Spleen (tissue), 13 donors: ENCODE measurements at regions of chr1 and their contacts with region 1.

Region 1: DNA sequence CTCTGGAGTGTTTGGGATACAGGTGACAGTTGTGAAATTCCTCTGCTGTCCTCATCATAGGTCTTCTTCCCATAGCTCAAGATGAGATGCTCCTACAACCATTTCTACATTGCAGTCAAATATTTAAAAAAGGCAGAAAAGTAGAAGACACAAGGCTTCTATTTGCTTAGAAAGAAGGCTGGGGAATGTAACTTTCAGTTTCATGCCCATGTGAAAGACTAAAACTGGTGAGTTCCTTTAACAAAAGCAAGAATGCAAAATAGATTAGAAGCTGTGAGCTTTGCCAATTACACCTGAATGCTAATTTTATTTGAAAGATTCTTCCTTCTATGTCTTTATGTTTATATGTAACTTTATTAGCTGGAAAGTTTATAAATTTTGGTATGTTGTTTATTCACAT is 1682.7 kb downstream of the BRINP3 start:
- DNase-seq: no peak
- H3K4me3 ChIP-seq: no peak overlapping the region
- H3K27ac ChIP-seq: no peak overlapping the region
- H3K4me1 ChIP-seq: no peaks in the 10 kb centered on the region
- H3K27me3 ChIP-seq: no peaks in the 10 kb centered on the region
- CTCF ChIP-seq: no peak
- POLR2A ChIP-seq: no peak

Region 2: DNA sequence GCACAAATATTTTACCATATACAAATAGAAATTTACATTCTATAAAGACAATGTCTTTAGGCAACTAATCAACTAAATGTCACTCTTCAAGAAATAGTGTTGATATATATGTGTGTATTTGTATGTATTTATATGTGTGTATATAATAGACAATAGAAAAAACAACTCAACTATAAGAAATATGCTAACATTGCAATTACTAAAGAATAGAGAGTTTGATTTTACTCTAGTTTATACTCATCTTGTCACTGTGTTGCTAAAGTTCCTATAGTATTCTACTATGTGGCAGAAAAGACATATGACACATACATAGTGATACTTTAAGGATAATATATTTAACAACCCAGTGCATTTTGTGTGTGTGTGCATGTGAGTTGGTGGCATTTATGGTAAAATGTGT is 237.9 kb before region 1 on chr1:
- intact Hi-C with region 1: no loop called
- DNase-seq: no peak
- H3K4me3 ChIP-seq: no peak overlapping the region
- H3K27ac ChIP-seq: no peak overlapping the region
- H3K4me1 ChIP-seq: no peaks in the 10 kb centered on the region
- H3K27me3 ChIP-seq: no peaks in the 10 kb centered on the region
- CTCF ChIP-seq: no peak
- POLR2A ChIP-seq: no peak

Region 3: DNA sequence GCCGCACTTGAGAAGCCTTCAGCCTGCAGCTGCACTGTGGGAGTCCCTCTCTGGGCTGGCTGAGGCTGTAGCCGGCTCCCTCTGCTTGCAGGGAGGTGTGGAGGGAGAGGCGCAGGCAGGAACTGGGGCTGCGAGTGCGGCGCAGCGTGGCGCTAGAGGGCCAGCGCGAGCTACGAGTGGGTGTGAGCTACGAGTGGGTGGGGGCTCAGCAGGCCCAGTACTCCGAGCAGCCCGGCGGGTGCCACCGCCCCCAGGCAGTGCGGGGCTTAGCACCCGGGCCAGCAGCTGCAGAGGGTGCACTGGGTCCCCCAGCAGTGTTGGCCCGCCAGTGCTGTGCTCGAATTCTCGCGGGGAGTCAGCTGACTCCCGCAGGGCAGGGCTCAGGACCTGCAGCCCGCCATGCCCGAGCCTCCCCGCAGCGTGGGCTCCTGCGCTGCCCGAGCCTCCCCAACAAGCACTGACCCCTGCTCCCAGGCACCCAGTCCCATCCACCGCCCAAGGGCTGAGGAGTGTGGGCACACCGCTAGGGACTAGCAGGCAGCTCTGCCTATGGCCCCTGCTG is 62.6 kb after region 1 on chr1:
- intact Hi-C with region 1: no loop called
- DNase-seq: no peak
- H3K4me3 ChIP-seq: no peak overlapping the region
- H3K27ac ChIP-seq: no peak overlapping the region
- H3K4me1 ChIP-seq: no peaks in the 10 kb centered on the region
- H3K27me3 ChIP-seq: no peaks in the 10 kb centered on the region
- CTCF ChIP-seq: no peak
- POLR2A ChIP-seq: no peak

Region 4: GRCh38 chr1:189868021-189868420 is 1073.1 kb after region 1 on chr1:
- intact Hi-C with region 1: loop called (anchors 10 kb)
- DNase-seq: no peak
- H3K4me3 ChIP-seq: no peak overlapping the region
- H3K27ac ChIP-seq: no peak overlapping the region
- H3K4me1 ChIP-seq: no peaks in the 10 kb centered on the region
- H3K27me3 ChIP-seq: no peaks in the 10 kb centered on the region
- CTCF ChIP-seq: no peak
- POLR2A ChIP-seq: no peak